CD14-positive monocyte (primary cell): ENCODE measurements at regions of chr6 and their contacts with region 1.

Region 1: DNA sequence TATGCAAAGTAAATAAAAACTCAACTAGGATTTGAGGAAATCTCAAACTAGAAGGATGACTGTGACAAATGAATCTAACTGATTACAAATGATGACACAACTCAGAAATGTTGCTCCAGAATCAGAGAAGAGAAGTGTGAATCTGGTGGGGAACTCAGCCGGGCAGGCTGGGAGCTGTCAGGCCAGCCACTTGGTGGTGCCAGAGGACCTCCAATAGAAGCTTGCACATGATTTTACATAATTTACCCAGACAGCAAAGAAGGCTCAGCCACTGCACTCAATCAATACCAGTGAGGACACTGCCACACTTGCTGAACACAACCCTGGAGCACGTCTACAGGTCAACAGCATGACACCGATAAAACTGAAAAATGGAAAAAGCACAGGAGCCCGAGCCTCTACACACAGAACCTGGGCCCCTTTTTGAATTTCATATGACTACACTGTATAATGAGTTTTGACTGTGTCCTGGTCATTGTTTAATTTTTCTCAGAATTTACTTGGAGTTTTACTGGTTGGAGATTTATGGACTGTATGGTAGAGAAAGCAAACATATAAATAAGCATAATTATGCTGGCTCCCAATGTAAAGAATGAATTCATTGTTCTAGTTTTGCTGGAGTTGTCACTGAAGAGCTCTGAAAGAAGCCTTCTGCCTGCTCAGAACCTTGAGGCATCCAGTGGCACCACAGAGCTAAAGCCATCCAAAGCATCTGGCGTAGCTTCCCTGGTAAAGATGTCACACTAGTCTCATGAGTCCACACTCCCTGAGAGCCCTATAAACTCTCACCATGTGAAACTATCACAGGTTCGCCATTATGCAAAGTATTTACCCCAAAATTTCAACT is 296.5 kb downstream of the THBS2 start:
- DNase-seq: peak; percentile 24 to 52 (median 32)
- H3K4me3 ChIP-seq: no peak overlapping the region
- H3K4me3 Mint-ChIP-seq: no peak overlapping the region
- H3K27ac ChIP-seq: no peak overlapping the region
- H3K27ac Mint-ChIP-seq: no peak overlapping the region
- H3K4me1 ChIP-seq: no peaks in the 10 kb centered on the region
- H3K4me1 Mint-ChIP-seq: no peaks in the 10 kb centered on the region
- H3K27me3 ChIP-seq: peaks cover 0 to 2% of the 10 kb centered on the region in 2 donors
- H3K27me3 Mint-ChIP-seq: peaks cover 0 to 6% (median 5%) of the 10 kb centered on the region in 3 donors
- CTCF ChIP-seq: peak; percentile 74

Region 2: DNA sequence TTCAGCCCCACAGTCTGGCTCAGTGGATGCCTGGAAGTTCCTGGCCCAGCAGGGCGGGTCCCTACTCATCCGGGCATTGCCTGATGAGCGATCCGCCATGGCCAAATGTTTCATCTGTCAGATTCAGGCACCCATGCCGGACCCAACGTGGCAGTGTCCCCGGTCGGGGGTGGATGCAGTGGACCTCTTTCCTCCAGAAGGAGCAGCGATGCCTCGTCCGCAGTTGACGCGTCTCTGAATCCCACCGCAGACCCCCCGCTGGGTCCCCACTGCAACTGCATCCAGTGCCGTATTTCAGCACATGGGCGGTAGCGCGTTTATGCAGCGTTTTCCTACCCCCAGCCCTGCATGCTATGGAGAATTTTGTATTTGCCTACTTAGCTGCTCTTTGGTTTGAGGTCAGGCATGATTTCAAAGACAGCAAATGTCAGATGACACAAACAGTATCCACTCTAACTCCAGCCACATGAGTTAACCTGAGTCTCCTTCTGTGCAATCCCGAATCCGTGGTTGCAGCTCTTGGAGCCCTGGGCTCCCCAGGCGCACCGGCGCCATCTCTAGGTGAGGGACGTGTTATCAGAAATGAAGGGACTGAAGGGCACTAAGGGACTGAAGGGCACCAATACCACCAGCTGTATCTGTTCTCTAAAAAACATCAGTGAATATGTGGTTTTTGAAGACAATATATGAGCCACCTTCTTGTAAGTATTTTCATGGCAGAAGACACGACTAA is 369.1 kb after region 1 on chr6:
- intact Hi-C with region 1: loop called in 1 of 2 experiments (anchors 2 kb)
- DNase-seq: peak; percentile 15 to 30 (median 18)
- H3K4me3 ChIP-seq: no peak overlapping the region
- H3K4me3 Mint-ChIP-seq: no peak overlapping the region
- H3K27ac ChIP-seq: no peak overlapping the region
- H3K27ac Mint-ChIP-seq: peak overlapping the region in 1 of 7 donors; percentile 27
- H3K4me1 ChIP-seq: peaks cover 5% of the 10 kb centered on the region in 2 donors
- H3K4me1 Mint-ChIP-seq: peaks cover 11% of the 10 kb centered on the region
- H3K27me3 ChIP-seq: no peaks in the 10 kb centered on the region
- H3K27me3 Mint-ChIP-seq: peaks cover 2 to 12% (median 8%) of the 10 kb centered on the region in 3 donors
- CTCF ChIP-seq: peak; percentile 52